ENCODE measurements at regions of chr7 and their contacts with region 1.

Region 1: GRCh38 chr7:518630-519483 is 789 bp downstream of the PDGFA start:
- DNase-seq: peak; percentile 80 to 98 (median 86)

Region 2: DNA sequence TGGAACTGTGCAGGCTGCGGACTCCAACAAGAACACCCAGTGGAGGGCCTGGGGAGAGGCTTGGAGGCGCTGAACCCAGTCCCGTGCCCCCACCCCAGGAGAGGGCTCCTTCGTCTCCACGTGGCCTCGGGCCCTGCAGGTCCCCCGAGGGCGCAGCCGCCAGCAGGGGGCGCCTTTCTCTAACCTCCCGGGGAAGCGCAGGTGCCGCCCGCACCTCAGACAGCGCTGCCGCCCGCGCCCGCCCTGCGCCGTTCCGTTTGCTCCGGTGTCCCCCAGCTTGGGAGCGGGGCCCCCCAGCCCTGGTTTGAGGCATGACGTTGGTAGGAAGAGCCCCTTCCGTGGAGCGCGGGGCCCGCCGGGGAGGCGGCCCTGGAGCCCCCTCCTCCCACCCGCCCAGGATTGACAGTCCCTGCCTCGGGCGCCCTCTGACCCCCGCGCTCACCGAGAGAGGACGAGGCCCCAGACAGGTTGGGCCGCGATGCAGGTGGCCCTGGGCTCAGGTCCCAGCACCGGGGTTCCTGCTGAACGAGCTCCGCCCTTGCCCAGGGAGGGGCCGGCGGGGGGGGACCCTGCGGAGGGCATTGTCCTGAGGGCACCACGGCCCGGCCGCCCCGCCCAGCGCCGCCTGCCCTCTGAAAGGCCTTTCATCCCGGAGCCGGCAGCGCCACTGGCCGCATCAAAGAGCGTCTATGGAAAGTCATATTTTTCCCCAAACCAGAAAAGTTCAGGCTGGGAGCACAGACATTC is 186.0 kb before region 1 on chr7:
- intact Hi-C with region 1: loop called (anchors 2 kb)
- DNase-seq: peak; percentile 51 to 97 (median 82)

Region 3: DNA sequence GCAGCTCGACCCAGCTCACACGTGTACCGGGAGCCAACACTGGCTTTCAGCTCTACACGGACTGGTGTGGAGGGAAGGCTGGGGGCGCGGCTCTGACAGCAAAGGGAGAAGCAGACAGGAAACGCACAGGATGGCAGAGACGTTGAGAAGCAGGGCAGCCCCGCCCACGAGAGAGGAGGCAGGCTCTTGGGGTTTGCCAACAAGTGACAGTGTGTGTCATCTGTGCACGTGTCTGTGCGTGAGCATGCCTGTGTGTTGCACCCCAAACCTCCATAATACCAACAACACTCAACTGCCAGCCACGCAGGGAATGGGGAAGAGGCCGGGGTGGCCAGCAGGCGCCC is 65.2 kb after region 1 on chr7:
- intact Hi-C with region 1: no loop called
- DNase-seq: peak in 6 of 10 donors; percentile 47 to 93 (median 82)

Region 4: GRCh38 chr7:597348-598178 is 78.7 kb after region 1 on chr7:
- intact Hi-C with region 1: loop called (anchors 5 kb)
- DNase-seq: peak in 3 of 10 donors; percentile 62 to 81 (median 74)

Region 5: GRCh38 chr7:636396-636795 is 117.5 kb after region 1 on chr7:
- intact Hi-C with region 1: loop called (anchors 10 kb)
- DNase-seq: peak in 7 of 10 donors; percentile 41 to 93 (median 65)

Region 6: GRCh38 chr7:774161-775109 is 255.6 kb after region 1 on chr7:
- intact Hi-C with region 1: loop called (anchors 5 kb)
- DNase-seq: peak; percentile 51 to 94 (median 69)